Gastrocnemius medialis (tissue), 4 donors: ENCODE measurements at regions of chr22 and their contacts with region 1.

Region 1: GRCh38 chr22:35350539-35351503 is 30.1 kb upstream of the HMOX1 start:
- DNase-seq: peak; percentile 94 to 95
- ATAC-seq: peak; percentile 84 to 86
- H3K4me3 ChIP-seq: peak overlapping the region; percentile 53 to 75 (median 61)
- H3K27ac ChIP-seq: peak overlapping the region; percentile 83 to 91 (median 86)
- H3K4me1 ChIP-seq: peaks cover 16 to 24% of the 10 kb centered on the region in 2 donors
- H3K27me3 ChIP-seq: no peaks in the 10 kb centered on the region
- CTCF ChIP-seq: peak; percentile 93 to 97 (median 95)
- POLR2A ChIP-seq: peak; percentile 68 to 75

Region 2: DNA sequence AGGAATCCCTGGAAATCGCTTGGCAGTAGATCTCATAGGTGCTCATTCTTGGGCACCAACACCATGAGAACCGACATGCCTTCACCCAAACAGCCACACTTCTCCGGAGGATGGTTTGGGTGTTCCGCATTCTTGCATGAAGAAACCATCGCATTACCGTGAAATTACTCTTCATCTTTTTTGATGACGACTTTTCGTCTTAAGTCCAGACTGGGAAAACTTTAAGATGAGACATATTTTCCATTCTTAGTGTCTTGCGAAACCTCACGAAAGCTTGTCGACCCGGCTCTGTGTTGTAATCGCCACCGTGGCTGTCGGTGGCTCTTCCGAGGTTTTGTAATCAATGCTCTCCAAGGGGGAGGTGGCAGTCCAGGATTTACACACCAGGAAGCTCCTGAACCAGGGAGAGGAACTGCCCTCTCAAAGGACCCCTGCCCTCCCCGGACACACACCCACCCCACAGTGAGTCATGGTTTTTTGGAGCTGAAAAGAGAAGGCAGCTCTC is 49.4 kb before region 1 on chr22:
- in situ Hi-C with region 1: no loop called
- intact Hi-C with region 1: no loop called
- DNase-seq: peak; percentile 48 to 85
- ATAC-seq: peak in 1 of 2 donors; percentile 29
- H3K4me3 ChIP-seq: peak overlapping the region; percentile 80 to 86 (median 82)
- H3K27ac ChIP-seq: peak overlapping the region; percentile 98 to 99 (median 98)
- H3K4me1 ChIP-seq: peaks cover 49 to 51% of the 10 kb centered on the region in 2 donors
- H3K27me3 ChIP-seq: no peaks in the 10 kb centered on the region
- CTCF ChIP-seq: no peak
- POLR2A ChIP-seq: peak; percentile 59 to 62

Region 3: GRCh38 chr22:35330258-35330861 is 20.5 kb before region 1 on chr22:
- in situ Hi-C with region 1: no loop called
- intact Hi-C with region 1: loop called (anchors 1 kb)
- DNase-seq: peak; percentile 88 to 94
- ATAC-seq: peak; percentile 72 to 86
- H3K4me3 ChIP-seq: no peak overlapping the region
- H3K27ac ChIP-seq: peak overlapping the region; percentile 83 to 98 (median 92)
- H3K4me1 ChIP-seq: peaks cover 7 to 14% of the 10 kb centered on the region in 2 donors
- H3K27me3 ChIP-seq: no peaks in the 10 kb centered on the region
- CTCF ChIP-seq: no peak
- POLR2A ChIP-seq: peak; percentile 54 to 55

Region 4: GRCh38 chr22:35380547-35381423 is 30.0 kb after region 1 on chr22 and contains the start of gene HMOX1:
- in situ Hi-C with region 1: no loop called
- intact Hi-C with region 1: loop called (anchors 1 kb)
- DNase-seq: peak; percentile 94 to 96
- ATAC-seq: peak; percentile 71 to 83
- H3K4me3 ChIP-seq: peak within 1 kb of the TSS; percentile 63 to 89 (median 75)
- H3K27ac ChIP-seq: peak within 1 kb of the TSS; percentile 88 to 94 (median 92)
- H3K4me1 ChIP-seq: peaks cover 47 to 51% of the 10 kb centered on the region in 2 donors
- H3K27me3 ChIP-seq: no peaks in the 10 kb centered on the region
- CTCF ChIP-seq: peak in 4 of 5 experiments; percentile 21 to 37 (median 36)
- POLR2A ChIP-seq: peak; percentile 92 to 94
- total RNA-seq, gene HMOX1: 11.4 to 131 (median 22.2) TPM

Region 5: DNA sequence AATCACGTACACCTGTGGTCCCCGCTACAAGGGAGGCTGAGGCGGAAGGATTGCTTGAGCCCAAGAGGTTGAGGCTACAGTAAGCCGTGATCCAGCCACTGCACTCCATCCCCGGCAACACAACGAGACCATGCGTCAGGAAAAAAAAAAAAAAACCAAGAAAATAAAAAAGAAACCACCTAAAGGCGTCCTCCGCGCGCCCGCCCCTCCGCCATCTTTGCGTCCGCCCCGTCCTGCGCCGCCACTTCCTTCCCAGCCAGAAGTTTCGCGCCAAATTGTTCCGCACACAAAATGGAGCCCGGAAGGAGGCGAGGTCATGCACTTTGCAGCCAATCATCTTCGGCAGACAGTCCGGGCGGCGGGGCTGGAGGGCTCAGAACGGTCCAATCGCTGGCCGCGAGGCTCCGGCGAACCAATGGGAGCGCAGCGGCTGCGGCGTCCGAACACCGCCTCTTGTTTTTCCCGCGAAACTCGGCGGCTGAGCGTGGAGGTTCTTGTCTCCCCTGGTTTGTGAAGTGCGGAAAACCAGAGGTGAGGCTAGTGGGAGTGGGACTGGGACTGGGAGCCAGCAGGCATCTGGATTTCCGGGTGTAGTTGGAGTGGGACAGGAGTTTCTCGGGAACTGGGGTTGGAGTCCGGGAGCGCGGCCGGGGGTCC is 49.0 kb after region 1 on chr22 and contains the start of gene MCM5:
- in situ Hi-C with region 1: no loop called
- intact Hi-C with region 1: loop called (anchors 1 kb)
- DNase-seq: peak; percentile 97 to 98
- ATAC-seq: peak; percentile 99
- H3K4me3 ChIP-seq: peak within 1 kb of the TSS; percentile 85 to 94 (median 88)
- H3K27ac ChIP-seq: peak within 1 kb of the TSS; percentile 66 to 77 (median 72)
- H3K4me1 ChIP-seq: peaks cover 5 to 18% of the 10 kb centered on the region in 2 donors
- H3K27me3 ChIP-seq: no peaks in the 10 kb centered on the region
- CTCF ChIP-seq: no peak
- POLR2A ChIP-seq: no peak
- total RNA-seq, gene MCM5: 7.1 to 19.3 (median 14.9) TPM

Region 6: GRCh38 chr22:35409783-35410662 is 59.2 kb after region 1 on chr22:
- in situ Hi-C with region 1: no loop called
- intact Hi-C with region 1: no loop called
- DNase-seq: no peak
- ATAC-seq: no peak
- H3K4me3 ChIP-seq: no peak overlapping the region
- H3K27ac ChIP-seq: no peak overlapping the region
- H3K4me1 ChIP-seq: no peaks in the 10 kb centered on the region
- H3K27me3 ChIP-seq: no peaks in the 10 kb centered on the region
- CTCF ChIP-seq: no peak
- POLR2A ChIP-seq: no peak

Region 7: GRCh38 chr22:35622191-35622913 is 271.5 kb after region 1 on chr22:
- in situ Hi-C with region 1: no loop called
- intact Hi-C with region 1: loop called (anchors 2 kb)
- DNase-seq: peak; percentile 96 to 100
- ATAC-seq: peak; percentile 55 to 61
- H3K4me3 ChIP-seq: peak overlapping the region in 3 of 4 donors; percentile 1 to 51 (median 8)
- H3K27ac ChIP-seq: peak overlapping the region; percentile 92 to 97 (median 97)
- H3K4me1 ChIP-seq: peaks cover 62 to 66% of the 10 kb centered on the region in 2 donors
- H3K27me3 ChIP-seq: no peaks in the 10 kb centered on the region
- CTCF ChIP-seq: no peak
- POLR2A ChIP-seq: peak; percentile 64 to 69